Psoas muscle (tissue), 8 donors: ENCODE measurements at regions of chr10 and their contacts with region 1.

Region 1: GRCh38 chr10:67764012-67764822 is 68.2 kb upstream of the CTNNA3 start:
- DNase-seq: peak; percentile 89 to 95
- ATAC-seq: peak; percentile 92 to 94 (median 94)
- H3K4me3 ChIP-seq: peak overlapping the region; percentile 85
- H3K27ac ChIP-seq: peak overlapping the region; percentile 91
- H3K4me1 ChIP-seq: no peaks in the 10 kb centered on the region
- H3K27me3 ChIP-seq: no peaks in the 10 kb centered on the region
- CTCF ChIP-seq: no peak

Region 2: GRCh38 chr10:67539312-67539711 is 224.9 kb before region 1 on chr10:
- intact Hi-C with region 1: loop called in 1 of 2 experiments (anchors 10 kb)
- DNase-seq: peak in 1 of 2 donors; percentile 47
- ATAC-seq: peak; percentile 43 to 94 (median 88)
- H3K4me3 ChIP-seq: peak overlapping the region; percentile 26
- H3K27ac ChIP-seq: no peak overlapping the region
- H3K4me1 ChIP-seq: peaks cover 12% of the 10 kb centered on the region
- H3K27me3 ChIP-seq: no peaks in the 10 kb centered on the region
- CTCF ChIP-seq: no peak